K562 (cell line): ENCODE measurements at regions of chr1 and their contacts with region 1.

Region 1: GRCh38 chr1:109263597-109264398 is 14.5 kb downstream of the CELSR2 start:
- DNase-seq: peak; percentile 91 to 96 (median 93)
- ATAC-seq: peak; percentile 99
- H3K4me3 ChIP-seq: no peak overlapping the region
- H3K27ac ChIP-seq: no peak overlapping the region
- H3K4me1 ChIP-seq: peaks cover 0 to 31% of the 10 kb centered on the region in 2 experiments; a peak in 2 of 5 replicates
- H3K27me3 ChIP-seq: no peaks in the 10 kb centered on the region
- CTCF ChIP-seq: peak; percentile 99 to 100 (median 100)
- EP300 ChIP-seq: peak; percentile 16; the same call in 1 of the 2 replicates
- POLR2A ChIP-seq: no peak
- RAD21 ChIP-seq: peak; percentile 98 to 100

Region 2: GRCh38 chr1:109193653-109194590 is 69.9 kb before region 1 on chr1:
- CTCF ChIA-PET with region 1: no interaction called
- POLR2A ChIA-PET with region 1: no interaction called
- in situ Hi-C with region 1: no loop called
- intact Hi-C with region 1: no loop called
- DNase-seq: peak; percentile 83 to 87 (median 84)
- ATAC-seq: peak; percentile 69
- H3K4me3 ChIP-seq: no peak overlapping the region
- H3K27ac ChIP-seq: no peak overlapping the region
- H3K4me1 ChIP-seq: peaks cover 19 to 50% of the 10 kb centered on the region in 2 experiments
- H3K27me3 ChIP-seq: no peaks in the 10 kb centered on the region
- CTCF ChIP-seq: peak; percentile 93 to 98 (median 94)
- EP300 ChIP-seq: no peak
- POLR2A ChIP-seq: no peak
- RAD21 ChIP-seq: peak; percentile 86 to 89

Region 3: DNA sequence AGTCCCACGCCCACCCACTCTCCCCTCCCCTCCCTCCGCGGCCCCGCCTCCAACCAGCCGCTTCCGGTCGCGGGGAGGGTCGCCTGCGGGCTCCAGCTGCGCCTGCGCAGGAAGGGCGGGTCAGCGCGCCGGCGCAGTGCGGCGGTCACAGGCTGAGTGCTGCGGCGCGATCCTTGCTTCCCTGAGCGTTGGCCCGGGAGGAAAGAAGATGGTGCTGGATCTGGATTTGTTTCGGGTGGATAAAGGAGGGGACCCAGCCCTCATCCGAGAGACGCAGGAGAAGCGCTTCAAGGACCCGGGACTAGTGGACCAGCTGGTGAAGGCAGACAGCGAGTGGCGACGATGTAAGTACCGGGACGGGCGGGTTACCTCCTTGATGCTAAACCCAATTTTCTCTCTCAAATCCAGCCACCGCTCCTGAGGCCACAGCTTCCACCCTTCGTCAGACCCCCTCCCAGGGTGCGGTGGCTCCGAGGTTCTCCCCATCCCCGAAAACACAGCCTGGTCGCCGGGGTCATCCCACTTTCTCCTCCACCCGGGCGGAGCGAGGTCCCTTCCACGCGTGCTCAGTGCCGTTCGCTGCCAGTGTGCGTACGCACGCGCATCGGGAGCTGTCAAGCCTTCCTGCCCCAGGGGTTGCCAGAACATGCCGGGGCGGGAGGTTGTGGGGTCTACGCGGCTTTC is 49.9 kb before region 1 on chr1 and contains the start of gene SARS1:
- CTCF ChIA-PET with region 1: no interaction called
- POLR2A ChIA-PET with region 1: no interaction called
- in situ Hi-C with region 1: no loop called
- intact Hi-C with region 1: no loop called
- DNase-seq: peak; percentile 96 to 99 (median 99)
- ATAC-seq: peak; percentile 88
- H3K4me3 ChIP-seq: peak within 1 kb of the TSS; percentile 67
- H3K27ac ChIP-seq: peak within 1 kb of the TSS; percentile 80
- H3K4me1 ChIP-seq: peaks cover 15 to 38% of the 10 kb centered on the region in 2 experiments
- H3K27me3 ChIP-seq: no peaks in the 10 kb centered on the region
- CTCF ChIP-seq: no peak; a peak in 1 of 6 replicates
- EP300 ChIP-seq: no peak; the same call in 1 of the 2 replicates
- POLR2A ChIP-seq: peak; percentile 96
- RAD21 ChIP-seq: no peak
- polyA plus RNA-seq, gene SARS1: 336 to 623 TPM

Region 4: GRCh38 chr1:109239580-109240095 is 24.2 kb before region 1 on chr1:
- CTCF ChIA-PET with region 1: no interaction called
- POLR2A ChIA-PET with region 1: no interaction called
- in situ Hi-C with region 1: no loop called
- intact Hi-C with region 1: no loop called
- DNase-seq: peak; percentile 72 to 79 (median 78)
- ATAC-seq: peak; percentile 90
- H3K4me3 ChIP-seq: no peak overlapping the region
- H3K27ac ChIP-seq: no peak overlapping the region
- H3K4me1 ChIP-seq: peaks cover 15 to 28% of the 10 kb centered on the region in 2 experiments; a peak in 4 of 5 replicates
- H3K27me3 ChIP-seq: no peaks in the 10 kb centered on the region
- CTCF ChIP-seq: peak; percentile 85 to 91 (median 88)
- EP300 ChIP-seq: no peak
- POLR2A ChIP-seq: peak; percentile 58; the same call in 1 of the 2 replicates
- RAD21 ChIP-seq: peak; percentile 46 to 64

Region 5: GRCh38 chr1:109404838-109405237 is 141.0 kb after region 1 on chr1:
- CTCF ChIA-PET with region 1: interaction called, 91 read pairs
- POLR2A ChIA-PET with region 1: interaction called, 7 read pairs
- in situ Hi-C with region 1: loop called (anchors 5 kb)
- intact Hi-C with region 1: no loop called
- DNase-seq: no peak
- ATAC-seq: no peak
- H3K4me3 ChIP-seq: no peak overlapping the region
- H3K27ac ChIP-seq: no peak overlapping the region
- H3K4me1 ChIP-seq: no peaks in the 10 kb centered on the region
- H3K27me3 ChIP-seq: no peaks in the 10 kb centered on the region
- CTCF ChIP-seq: no peak
- EP300 ChIP-seq: no peak
- POLR2A ChIP-seq: no peak
- RAD21 ChIP-seq: no peak